CD8-positive, alpha-beta T cell (primary cell): ENCODE measurements at regions of chr13 and their contacts with region 1.

Region 1: DNA sequence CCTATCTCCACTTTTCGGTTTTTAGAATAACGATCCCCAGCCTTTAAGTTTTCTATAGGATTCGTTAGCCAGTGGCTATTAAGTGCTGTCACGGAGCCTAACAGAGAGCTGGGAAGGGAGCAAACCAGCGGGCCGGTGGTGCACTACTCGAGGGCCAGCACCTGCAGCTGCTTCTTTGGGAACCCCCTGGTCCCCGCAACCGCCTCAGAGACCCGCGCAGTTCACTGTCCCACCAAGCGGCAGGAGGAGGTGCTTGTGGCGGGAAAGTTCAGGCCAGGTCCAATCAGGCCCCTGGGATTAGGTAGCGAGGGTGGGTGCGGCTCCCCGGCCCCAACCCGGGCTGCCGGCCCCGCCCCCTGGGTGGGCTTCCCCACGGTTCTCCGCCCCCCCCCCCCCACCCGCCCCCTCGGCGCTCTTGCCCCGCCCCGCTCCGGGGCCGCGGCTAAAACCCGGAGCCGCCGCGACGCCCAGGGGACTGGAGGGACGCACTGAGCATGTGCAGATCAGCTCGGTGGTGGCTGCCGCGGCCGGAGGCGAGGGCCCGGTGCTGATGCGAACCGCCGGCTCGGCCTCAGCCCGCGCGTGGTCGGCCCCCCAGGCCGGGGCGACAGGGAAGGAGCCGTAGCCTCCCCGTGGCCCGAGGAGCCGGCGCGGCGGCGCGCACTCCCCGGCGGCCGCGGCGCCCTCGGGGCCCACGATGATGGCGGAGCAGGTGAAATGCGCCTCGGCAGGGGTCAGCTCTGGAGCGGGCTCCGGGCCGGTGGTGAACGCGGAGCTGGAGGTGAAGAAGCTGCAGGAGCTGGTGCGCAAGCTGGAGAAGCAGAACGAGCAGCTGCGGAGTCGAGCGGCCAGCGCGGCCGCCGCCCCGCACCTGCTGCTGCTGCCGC is at the start of gene SLAIN1:
- DNase-seq: peak; percentile 65 to 94 (median 86)
- ATAC-seq: peak; percentile 80
- H3K4me3 ChIP-seq: peak within 1 kb of the TSS; percentile 88
- H3K4me3 Mint-ChIP-seq: peak within 1 kb of the TSS; percentile 96
- H3K27ac ChIP-seq: peak within 1 kb of the TSS; percentile 54 to 71
- H3K27ac Mint-ChIP-seq: peak within 1 kb of the TSS; percentile 97
- H3K4me1 ChIP-seq: peaks cover 35% of the 10 kb centered on the region
- H3K4me1 Mint-ChIP-seq: peaks cover 44% of the 10 kb centered on the region
- H3K27me3 ChIP-seq: no peaks in the 10 kb centered on the region
- H3K27me3 Mint-ChIP-seq: no peaks in the 10 kb centered on the region
- CTCF ChIP-seq: no peak
- total RNA-seq, gene SLAIN1: 35.4 to 36.4 TPM

Region 2: GRCh38 chr13:76991796-76992547 is 705.5 kb before region 1 on chr13 and contains the start of gene CLN5:
- CTCF ChIA-PET with region 1: no interaction called
- POLR2A ChIA-PET with region 1: no interaction called
- intact Hi-C with region 1: loop called in 1 of 2 experiments (anchors 5 kb)
- DNase-seq: peak; percentile 91 to 98 (median 94)
- ATAC-seq: peak; percentile 83
- H3K4me3 ChIP-seq: peak within 1 kb of the TSS; percentile 72 to 86
- H3K4me3 Mint-ChIP-seq: peak within 1 kb of the TSS; percentile 95
- H3K27ac ChIP-seq: peak within 1 kb of the TSS; percentile 84 to 97
- H3K27ac Mint-ChIP-seq: peak within 1 kb of the TSS; percentile 99
- H3K4me1 ChIP-seq: peaks cover 31% of the 10 kb centered on the region
- H3K4me1 Mint-ChIP-seq: peaks cover 53% of the 10 kb centered on the region
- H3K27me3 ChIP-seq: peaks cover 0 to 13% of the 10 kb centered on the region in 2 experiments
- H3K27me3 Mint-ChIP-seq: peaks cover 12% of the 10 kb centered on the region
- CTCF ChIP-seq: no peak
- total RNA-seq, gene CLN5: 23.3 to 23.4 TPM

Region 3: GRCh38 chr13:77329133-77329910 is 368.1 kb before region 1 on chr13:
- CTCF ChIA-PET with region 1: interaction called, 3 read pairs
- POLR2A ChIA-PET with region 1: interaction called, 3 read pairs
- intact Hi-C with region 1: loop called (anchors 1 to 2 kb)
- DNase-seq: peak; percentile 75 to 99 (median 88)
- ATAC-seq: peak; percentile 65
- H3K4me3 ChIP-seq: peak overlapping the region; percentile 81 to 98
- H3K4me3 Mint-ChIP-seq: peak overlapping the region; percentile 91
- H3K27ac ChIP-seq: peak overlapping the region; percentile 64 to 85
- H3K27ac Mint-ChIP-seq: peak overlapping the region; percentile 97
- H3K4me1 ChIP-seq: peaks cover 42% of the 10 kb centered on the region
- H3K4me1 Mint-ChIP-seq: peaks cover 49% of the 10 kb centered on the region
- H3K27me3 ChIP-seq: no peaks in the 10 kb centered on the region
- H3K27me3 Mint-ChIP-seq: no peaks in the 10 kb centered on the region
- CTCF ChIP-seq: no peak

Region 4: DNA sequence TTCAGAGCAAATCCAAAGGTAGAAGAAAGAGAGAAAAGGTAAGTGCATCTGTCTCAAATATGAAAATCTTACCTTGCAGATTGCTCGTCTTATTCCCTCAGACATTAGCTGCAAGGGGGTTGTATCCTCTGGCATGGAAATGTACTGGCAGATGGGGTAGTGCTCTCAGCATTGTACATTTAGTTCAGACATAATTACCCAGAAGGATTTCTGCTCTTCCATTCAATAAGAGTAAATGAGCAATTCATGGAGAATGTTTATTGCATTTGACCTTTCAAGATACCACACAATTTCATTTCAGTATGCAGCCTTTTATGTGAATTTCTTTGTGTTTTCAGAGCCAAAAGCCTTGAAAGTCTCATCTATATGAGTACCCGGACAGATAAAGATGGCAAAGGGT is 98.1 kb before region 1 on chr13:
- CTCF ChIA-PET with region 1: no interaction called
- POLR2A ChIA-PET with region 1: no interaction called
- intact Hi-C with region 1: loop called in 1 of 2 experiments (anchors 5 kb)
- DNase-seq: no peak
- ATAC-seq: no peak
- H3K4me3 ChIP-seq: no peak overlapping the region
- H3K4me3 Mint-ChIP-seq: no peak overlapping the region
- H3K27ac ChIP-seq: no peak overlapping the region
- H3K27ac Mint-ChIP-seq: no peak overlapping the region
- H3K4me1 ChIP-seq: no peaks in the 10 kb centered on the region
- H3K4me1 Mint-ChIP-seq: no peaks in the 10 kb centered on the region
- H3K27me3 ChIP-seq: no peaks in the 10 kb centered on the region
- H3K27me3 Mint-ChIP-seq: peaks cover 14% of the 10 kb centered on the region
- CTCF ChIP-seq: no peak

Region 5: GRCh38 chr13:77751513-77752456 is 54.3 kb after region 1 on chr13:
- CTCF ChIA-PET with region 1: no interaction called
- POLR2A ChIA-PET with region 1: no interaction called
- intact Hi-C with region 1: loop called (anchors 2 to 5 kb)
- DNase-seq: peak in 8 of 9 experiments; percentile 12 to 80 (median 38)
- ATAC-seq: peak; percentile 94
- H3K4me3 ChIP-seq: no peak overlapping the region
- H3K4me3 Mint-ChIP-seq: no peak overlapping the region
- H3K27ac ChIP-seq: no peak overlapping the region
- H3K27ac Mint-ChIP-seq: no peak overlapping the region
- H3K4me1 ChIP-seq: no peaks in the 10 kb centered on the region
- H3K4me1 Mint-ChIP-seq: peaks cover 20% of the 10 kb centered on the region
- H3K27me3 ChIP-seq: no peaks in the 10 kb centered on the region
- H3K27me3 Mint-ChIP-seq: no peaks in the 10 kb centered on the region
- CTCF ChIP-seq: peak; percentile 93

Region 6: GRCh38 chr13:78022164-78022877 is 324.9 kb after region 1 on chr13:
- CTCF ChIA-PET with region 1: no interaction called
- POLR2A ChIA-PET with region 1: no interaction called
- intact Hi-C with region 1: no loop called
- DNase-seq: peak in 8 of 9 experiments; percentile 7 to 72 (median 28)
- ATAC-seq: peak; percentile 88
- H3K4me3 ChIP-seq: no peak overlapping the region
- H3K4me3 Mint-ChIP-seq: no peak overlapping the region
- H3K27ac ChIP-seq: peak overlapping the region; percentile 19 to 74
- H3K27ac Mint-ChIP-seq: peak overlapping the region; percentile 64
- H3K4me1 ChIP-seq: peaks cover 10% of the 10 kb centered on the region
- H3K4me1 Mint-ChIP-seq: peaks cover 13% of the 10 kb centered on the region
- H3K27me3 ChIP-seq: no peaks in the 10 kb centered on the region
- H3K27me3 Mint-ChIP-seq: peaks cover 4% of the 10 kb centered on the region
- CTCF ChIP-seq: no peak

Region 7: DNA sequence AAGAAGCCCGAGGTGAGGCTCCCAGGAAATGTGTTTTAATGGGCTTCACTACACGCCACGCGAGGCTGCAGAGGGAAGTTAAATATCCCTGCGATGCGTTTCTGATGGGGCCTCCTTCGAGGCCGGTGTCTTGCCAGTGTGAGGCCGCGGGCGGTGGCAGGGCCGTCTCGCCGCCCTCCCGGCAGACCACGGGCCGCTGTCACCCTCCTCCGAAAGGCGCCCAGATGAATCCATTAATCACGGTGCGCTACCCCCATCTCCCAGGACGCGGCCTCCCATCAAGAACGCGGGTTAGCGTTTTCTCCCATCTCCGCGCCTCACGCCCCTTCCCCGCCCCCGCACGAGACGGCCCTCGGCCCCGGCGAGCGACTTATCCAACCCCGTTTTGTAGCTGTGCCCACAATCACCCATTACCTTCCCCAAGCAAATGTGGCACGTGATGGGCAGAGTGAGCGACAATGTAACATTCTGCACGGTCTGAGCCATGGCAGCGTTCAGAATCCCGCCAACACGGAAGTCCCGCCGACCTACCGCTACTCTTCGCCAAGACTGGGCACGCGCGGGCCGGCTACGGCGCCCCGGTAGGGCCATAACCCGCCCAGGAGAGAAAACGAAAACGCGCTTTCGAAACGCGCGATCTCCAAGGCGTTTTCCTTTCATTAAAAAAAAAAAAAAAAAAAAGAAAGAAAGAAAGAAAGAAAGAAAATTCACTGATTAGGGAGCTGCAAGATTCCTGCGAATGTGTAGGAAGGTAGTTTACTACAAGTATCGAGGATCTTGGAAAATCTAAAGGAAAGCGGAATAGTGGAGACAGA is 961.4 kb after region 1 on chr13 and contains the start of gene OBI1:
- CTCF ChIA-PET with region 1: no interaction called
- POLR2A ChIA-PET with region 1: no interaction called
- intact Hi-C with region 1: loop called (anchors 2 to 5 kb)
- DNase-seq: peak; percentile 80 to 94 (median 91)
- ATAC-seq: peak; percentile 97
- H3K4me3 ChIP-seq: peak within 1 kb of the TSS; percentile 83 to 100
- H3K4me3 Mint-ChIP-seq: peak within 1 kb of the TSS; percentile 98
- H3K27ac ChIP-seq: peak within 1 kb of the TSS; percentile 64 to 70
- H3K27ac Mint-ChIP-seq: peak within 1 kb of the TSS; percentile 95
- H3K4me1 ChIP-seq: peaks cover 7% of the 10 kb centered on the region
- H3K4me1 Mint-ChIP-seq: peaks cover 42% of the 10 kb centered on the region
- H3K27me3 ChIP-seq: no peaks in the 10 kb centered on the region
- H3K27me3 Mint-ChIP-seq: no peaks in the 10 kb centered on the region
- CTCF ChIP-seq: no peak
- total RNA-seq, gene OBI1: 3.5 to 4.0 TPM

Region 8: DNA sequence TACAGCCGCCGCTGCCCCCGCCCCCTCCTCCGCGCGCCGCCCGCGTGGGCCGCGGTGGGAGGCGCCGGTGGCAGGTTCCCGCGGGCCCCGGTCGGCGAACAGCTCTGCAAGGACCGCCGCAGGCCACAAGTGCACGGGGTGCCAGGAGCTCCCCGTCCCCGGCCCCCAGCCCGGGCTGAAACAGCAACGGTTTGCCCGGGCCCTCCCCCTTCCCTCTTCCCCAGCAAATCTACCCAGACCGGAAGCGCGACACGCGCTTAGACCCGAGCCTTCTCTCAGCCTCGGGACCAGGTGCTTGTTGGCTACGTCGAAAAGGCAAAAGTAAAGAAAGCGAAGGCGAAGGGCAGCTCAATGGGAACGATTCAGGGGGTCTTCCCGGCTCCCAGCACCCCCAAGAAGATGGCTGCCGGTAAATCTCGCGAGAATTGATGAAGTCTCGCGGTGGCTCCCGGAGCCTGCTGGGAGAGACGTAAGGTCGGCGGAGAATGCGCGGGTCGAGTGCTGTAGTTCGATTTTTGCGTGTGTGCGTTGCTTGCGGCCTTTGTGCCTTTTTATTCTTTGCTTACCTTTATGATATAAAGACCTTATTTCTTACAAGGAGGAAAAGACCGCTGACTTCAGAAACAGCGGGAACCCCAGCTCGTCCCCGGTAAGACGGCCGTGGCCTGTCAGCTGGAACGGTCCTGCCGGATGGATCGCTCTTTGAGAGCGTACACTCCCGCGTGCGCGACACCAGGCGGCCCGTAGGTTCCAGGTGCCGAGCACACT is 1708.6 kb after region 1 on chr13 and contains the start of gene RBM26:
- CTCF ChIA-PET with region 1: no interaction called
- POLR2A ChIA-PET with region 1: no interaction called
- intact Hi-C with region 1: loop called in 1 of 2 experiments (anchors 10 kb)
- DNase-seq: peak; percentile 86 to 98 (median 93)
- ATAC-seq: peak; percentile 89
- H3K4me3 ChIP-seq: peak within 1 kb of the TSS; percentile 84 to 89
- H3K4me3 Mint-ChIP-seq: peak within 1 kb of the TSS; percentile 96
- H3K27ac ChIP-seq: peak within 1 kb of the TSS; percentile 89 to 92
- H3K27ac Mint-ChIP-seq: peak within 1 kb of the TSS; percentile 99
- H3K4me1 ChIP-seq: peaks cover 56% of the 10 kb centered on the region
- H3K4me1 Mint-ChIP-seq: peaks cover 30% of the 10 kb centered on the region
- H3K27me3 ChIP-seq: no peaks in the 10 kb centered on the region
- H3K27me3 Mint-ChIP-seq: no peaks in the 10 kb centered on the region
- CTCF ChIP-seq: peak; percentile 24
- total RNA-seq, gene RBM26: 55.7 to 61.1 TPM